Activated CD4-positive, alpha-beta memory T cell treated with anti-CD3 and anti-CD28 coated beads, Interleukin-2, amount 10 ng/mL, durations not matched to agents 7 days and 5 days (primary cell): ENCODE measurements at regions of chr11 and their contacts with region 1.

Region 1: DNA sequence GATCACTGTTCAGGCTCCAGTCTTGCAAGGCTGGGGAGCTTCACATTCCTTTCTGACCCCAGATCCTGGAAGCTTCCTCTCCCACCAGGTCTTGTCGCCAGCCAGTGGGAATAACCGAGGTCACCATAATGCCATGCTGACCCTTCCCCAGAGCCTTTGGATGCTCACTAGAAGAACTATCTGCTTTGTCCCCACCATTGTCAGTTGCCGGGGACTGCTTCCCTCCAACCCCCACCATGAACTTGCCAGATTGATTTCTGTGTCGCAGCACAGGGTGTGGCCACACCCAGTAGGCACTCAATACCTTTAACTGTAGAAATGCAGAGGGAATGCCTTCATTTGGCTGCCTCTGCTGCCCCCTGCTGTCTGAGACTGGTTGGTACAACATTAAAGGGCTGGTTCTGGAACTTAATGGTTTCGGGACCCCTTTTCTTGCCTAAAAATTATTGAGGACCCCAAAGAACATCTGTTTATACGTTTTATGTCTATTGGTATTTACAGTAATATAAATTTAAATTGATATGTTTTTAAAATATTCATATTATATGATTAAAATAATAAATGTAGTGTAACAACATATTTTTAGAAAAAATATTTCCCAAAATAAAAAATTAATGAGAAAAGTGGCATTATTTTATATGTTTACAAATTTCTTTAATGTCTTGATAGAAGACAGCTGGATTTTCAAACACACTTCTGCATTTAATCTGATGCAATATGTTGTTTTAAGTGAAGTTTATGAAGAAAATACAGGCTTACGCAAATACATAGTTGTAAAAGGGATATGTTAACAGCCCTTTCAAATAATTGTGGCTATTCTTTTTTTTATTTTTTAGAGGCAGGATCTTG is 6.7 kb upstream of the GDPD5 start:
- DNase-seq: peak; percentile 88
- H3K4me3 Mint-ChIP-seq: peak overlapping the region; percentile 6
- H3K27ac Mint-ChIP-seq: peak overlapping the region; percentile 75
- H3K4me1 Mint-ChIP-seq: peaks cover 70% of the 10 kb centered on the region
- H3K27me3 Mint-ChIP-seq: peaks cover 5% of the 10 kb centered on the region

Region 2: DNA sequence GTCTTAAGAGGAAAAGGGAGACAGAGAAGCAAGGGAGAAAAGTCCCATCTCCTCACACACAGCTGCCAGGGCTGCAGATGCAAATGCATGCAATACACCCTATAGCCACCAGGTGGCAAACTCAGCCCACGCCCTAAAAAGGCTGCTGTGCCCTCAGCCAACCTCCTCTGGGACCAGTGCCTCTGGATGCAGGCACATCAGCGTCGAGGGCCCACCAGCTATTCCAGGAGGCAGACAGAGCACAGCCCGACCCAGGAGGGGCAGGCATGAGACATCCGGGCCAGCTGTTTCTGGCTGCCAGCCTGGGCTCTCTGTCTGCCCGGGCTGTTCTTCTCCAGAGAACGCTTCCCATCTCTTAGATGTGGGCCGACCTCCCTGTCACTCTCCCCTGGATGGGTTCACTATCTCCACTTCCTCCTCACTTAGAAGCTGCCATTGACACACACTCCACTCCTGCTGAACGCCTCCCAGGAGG is 252.2 kb before region 1 on chr11:
- CTCF ChIA-PET with region 1: interaction called, 10 read pairs
- POLR2A ChIA-PET with region 1: interaction called, 8 read pairs
- DNase-seq: peak; percentile 82
- H3K4me3 Mint-ChIP-seq: no peak overlapping the region
- H3K27ac Mint-ChIP-seq: no peak overlapping the region
- H3K4me1 Mint-ChIP-seq: peaks cover 24% of the 10 kb centered on the region
- H3K27me3 Mint-ChIP-seq: no peaks in the 10 kb centered on the region

Region 3: GRCh38 chr11:75406338-75406777 is 126.1 kb before region 1 on chr11:
- CTCF ChIA-PET with region 1: interaction called, 13 read pairs
- POLR2A ChIA-PET with region 1: interaction called, 16 read pairs
- DNase-seq: no peak
- H3K4me3 Mint-ChIP-seq: no peak overlapping the region
- H3K27ac Mint-ChIP-seq: no peak overlapping the region
- H3K4me1 Mint-ChIP-seq: peaks cover 49% of the 10 kb centered on the region
- H3K27me3 Mint-ChIP-seq: no peaks in the 10 kb centered on the region

Region 4: DNA sequence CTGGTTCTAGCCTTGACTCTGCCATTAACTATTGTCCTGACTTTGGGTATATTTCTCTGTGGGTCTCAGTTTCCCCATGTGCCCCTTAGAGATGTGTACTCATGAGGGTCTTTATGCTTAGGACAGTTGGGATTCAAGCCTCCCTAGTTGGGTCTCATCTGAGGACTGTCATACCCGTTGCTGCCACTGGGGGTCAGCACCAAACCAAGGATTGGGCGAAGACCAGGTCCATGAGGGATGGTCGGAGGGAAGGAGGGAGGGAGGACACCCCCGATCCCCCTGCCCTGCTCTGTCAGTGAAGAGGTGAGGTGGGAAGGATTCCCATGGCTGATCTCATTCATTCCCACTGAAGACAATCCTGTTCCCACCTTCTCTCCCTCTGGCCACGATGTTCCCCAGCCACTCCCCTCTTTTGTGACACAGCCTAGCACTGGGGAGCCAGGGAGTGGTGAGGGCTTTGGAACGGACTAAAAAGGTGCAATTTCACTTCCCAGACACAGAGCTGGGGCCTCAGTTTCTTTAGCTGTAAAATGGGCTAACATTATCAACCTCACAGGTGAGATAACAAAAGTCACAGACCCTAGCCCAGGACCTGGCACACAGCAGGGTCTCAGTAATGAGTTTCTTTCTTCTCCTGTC is 87.0 kb before region 1 on chr11:
- CTCF ChIA-PET with region 1: interaction called, 159 read pairs
- POLR2A ChIA-PET with region 1: interaction called, 11 read pairs
- DNase-seq: peak; percentile 73
- H3K4me3 Mint-ChIP-seq: no peak overlapping the region
- H3K27ac Mint-ChIP-seq: no peak overlapping the region
- H3K4me1 Mint-ChIP-seq: peaks cover 5% of the 10 kb centered on the region
- H3K27me3 Mint-ChIP-seq: no peaks in the 10 kb centered on the region

Region 5: DNA sequence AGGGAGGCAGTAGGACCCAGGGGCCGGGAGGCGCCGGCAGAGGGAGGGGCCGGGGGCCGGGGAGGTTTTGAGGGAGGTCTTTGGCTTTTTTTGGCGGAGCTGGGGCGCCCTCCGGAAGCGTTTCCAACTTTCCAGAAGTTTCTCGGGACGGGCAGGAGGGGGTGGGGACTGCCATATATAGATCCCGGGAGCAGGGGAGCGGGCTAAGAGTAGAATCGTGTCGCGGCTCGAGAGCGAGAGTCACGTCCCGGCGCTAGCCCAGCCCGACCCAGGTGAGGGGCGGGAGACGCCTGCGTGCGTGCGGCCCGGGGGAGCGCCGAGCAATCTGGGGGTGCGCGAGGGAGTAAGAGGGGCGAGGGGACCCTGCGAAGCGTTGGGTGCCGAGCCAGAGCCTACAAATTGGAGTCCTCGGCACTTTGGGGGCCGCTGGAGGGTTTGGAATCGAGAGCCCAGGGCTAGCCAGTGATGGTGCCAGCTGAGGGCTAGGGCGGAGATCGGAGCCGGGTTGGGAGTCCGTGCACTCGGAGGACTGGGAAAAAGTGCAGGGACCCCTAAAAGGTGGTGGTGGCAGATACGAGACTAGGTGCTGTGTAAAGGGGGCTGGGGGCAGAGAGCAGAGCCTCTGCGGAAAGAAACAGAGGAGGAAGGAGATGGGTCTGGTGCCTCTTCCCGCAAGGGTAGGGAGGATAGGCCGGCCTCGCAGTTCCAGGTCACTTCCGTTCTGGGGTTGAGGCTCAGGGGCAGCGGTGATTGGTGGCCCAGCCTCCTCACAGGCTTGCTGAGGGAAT is 29.8 kb after region 1 on chr11 and contains the start of gene SERPINH1:
- CTCF ChIA-PET with region 1: interaction called, 3 read pairs
- POLR2A ChIA-PET with region 1: interaction called, 20 read pairs
- DNase-seq: peak; percentile 74
- H3K4me3 Mint-ChIP-seq: peak within 1 kb of the TSS; percentile 99
- H3K27ac Mint-ChIP-seq: peak within 1 kb of the TSS; percentile 93
- H3K4me1 Mint-ChIP-seq: peaks cover 33% of the 10 kb centered on the region
- H3K27me3 Mint-ChIP-seq: no peaks in the 10 kb centered on the region
- total RNA-seq, gene SERPINH1: 12.2 to 13.3 TPM